ENCODE measurements at regions of chr4 and their contacts with region 1.

Region 1: GRCh38 chr4:176538217-176538925 is 218.6 kb downstream of the SPCS3 start:
- DNase-seq: peak; percentile 80
- ATAC-seq: peak; percentile 92
- H3K4me3 ChIP-seq: 0 out of 2 replicates have a peak overlapping the region, but pooled peaks have one; percentile 23
- H3K27ac ChIP-seq: peak overlapping the region; percentile 97
- H3K4me1 ChIP-seq: peaks cover 40% of the 10 kb centered on the region
- H3K27me3 ChIP-seq: no peaks in the 10 kb centered on the region
- CTCF ChIP-seq: no peak

Region 2: GRCh38 chr4:176400816-176401461 is 137.4 kb before region 1 on chr4:
- CTCF ChIA-PET with region 1: no interaction called
- POLR2A ChIA-PET with region 1: no interaction called
- intact Hi-C with region 1: loop called (anchors 5 kb)
- DNase-seq: peak; percentile 87
- ATAC-seq: peak; percentile 83
- H3K4me3 ChIP-seq: no peak overlapping the region
- H3K27ac ChIP-seq: peak overlapping the region; percentile 95
- H3K4me1 ChIP-seq: peaks cover 45% of the 10 kb centered on the region
- H3K27me3 ChIP-seq: no peaks in the 10 kb centered on the region
- CTCF ChIP-seq: no peak